Naive thymus-derived CD4-positive, alpha-beta T cell (primary cell): ENCODE measurements at regions of chr16 and their contacts with region 1.

Region 1: DNA sequence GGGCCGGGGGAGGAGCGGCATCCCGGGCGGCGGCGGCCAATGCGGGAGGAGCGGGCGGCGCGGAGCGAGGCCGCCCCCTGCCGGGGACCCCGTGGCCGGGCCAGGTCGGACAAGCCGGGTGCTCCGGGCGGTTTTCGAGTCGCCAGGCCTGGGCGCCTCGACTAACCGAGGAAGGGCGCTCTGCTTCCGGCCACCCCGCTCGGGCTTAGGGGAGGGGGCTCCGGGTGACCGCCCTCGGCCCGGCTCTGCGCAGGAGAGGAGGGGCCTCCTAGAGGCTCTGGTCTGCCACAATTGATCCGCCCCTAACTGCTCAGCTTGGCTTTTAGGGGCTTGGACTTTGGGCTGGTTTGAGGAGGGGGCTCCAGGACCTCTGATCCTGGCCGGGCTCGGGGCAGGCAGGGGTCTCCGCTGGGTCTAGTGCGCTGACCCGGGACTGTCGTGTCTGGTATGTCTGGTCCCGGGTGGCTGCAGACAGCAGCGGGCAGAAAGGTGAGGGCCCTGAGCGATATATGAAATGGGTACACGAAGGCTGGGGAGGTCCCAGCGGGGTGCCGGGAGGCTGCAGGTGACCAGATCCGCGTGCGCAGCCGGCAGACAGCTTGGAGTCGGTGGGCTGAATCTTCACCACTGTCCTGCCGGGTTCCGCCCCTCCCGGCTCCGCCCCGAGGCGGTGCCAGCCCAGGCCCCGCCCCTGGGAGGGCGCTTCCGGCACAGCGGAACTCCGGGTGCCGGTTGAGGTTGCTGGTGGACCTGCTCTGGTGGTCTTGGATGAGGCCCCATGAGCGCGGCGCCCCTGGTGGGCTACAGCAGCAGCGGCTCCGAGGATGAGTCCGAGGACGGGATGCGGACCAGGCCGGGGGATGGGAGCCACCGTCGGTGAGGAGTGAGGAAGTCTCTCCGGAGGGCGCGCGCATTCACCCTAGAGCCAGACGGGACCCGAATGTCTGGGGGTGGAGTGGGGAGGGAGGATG is at the start of gene USB1:
- DNase-seq: peak; percentile 74 to 96 (median 86)
- ATAC-seq: peak; percentile 87
- H3K4me3 ChIP-seq: peak within 1 kb of the TSS; percentile 98
- H3K4me3 Mint-ChIP-seq: peak within 1 kb of the TSS; percentile 85 to 94 (median 92)
- H3K27ac ChIP-seq: peak within 1 kb of the TSS; percentile 85
- H3K27ac Mint-ChIP-seq: peak within 1 kb of the TSS; percentile 76 to 95 (median 90)
- H3K4me1 ChIP-seq: peaks cover 37% of the 10 kb centered on the region in 2 donors
- H3K4me1 Mint-ChIP-seq: peaks cover 31 to 75% (median 58%) of the 10 kb centered on the region in 7 donors
- H3K27me3 ChIP-seq: no peaks in the 10 kb centered on the region
- H3K27me3 Mint-ChIP-seq: no peaks in the 10 kb centered on the region
- total RNA-seq, gene USB1: 28.7 to 50.8 (median 28.9) TPM

Region 2: DNA sequence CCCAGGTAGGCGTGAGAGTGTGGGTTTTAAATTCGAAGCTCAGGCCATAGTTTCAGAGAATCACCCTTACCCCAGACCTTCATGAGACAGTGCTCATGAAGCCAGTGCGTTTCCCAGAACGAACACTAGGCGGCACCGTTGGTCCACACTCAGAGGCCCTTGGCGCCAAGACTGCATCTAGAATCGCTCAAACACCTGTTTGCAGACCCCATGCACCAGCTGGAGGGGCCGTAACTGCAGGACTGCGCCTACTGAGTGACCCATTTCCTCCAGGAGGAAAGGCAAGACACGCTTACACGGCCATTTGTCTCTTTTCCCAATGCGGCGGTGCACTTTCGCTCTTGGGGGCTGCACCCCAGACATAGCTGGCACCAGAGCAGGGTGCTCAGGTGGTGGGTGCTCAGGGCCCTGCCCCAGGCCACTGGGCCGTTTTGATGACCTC is 424.5 kb before region 1 on chr16:
- CTCF ChIA-PET with region 1: no interaction called
- POLR2A ChIA-PET with region 1: interaction called, 3 read pairs
- intact Hi-C with region 1: loop called (anchors 1 to 2 kb)
- DNase-seq: peak; percentile 55 to 83 (median 72)
- ATAC-seq: peak; percentile 87
- H3K4me3 ChIP-seq: no peak overlapping the region
- H3K4me3 Mint-ChIP-seq: no peak overlapping the region
- H3K27ac ChIP-seq: no peak overlapping the region
- H3K27ac Mint-ChIP-seq: peak overlapping the region in 1 of 9 donors; percentile 96
- H3K4me1 ChIP-seq: peaks cover 0 to 44% of the 10 kb centered on the region in 2 donors
- H3K4me1 Mint-ChIP-seq: peaks cover 0 to 45% (median 6%) of the 10 kb centered on the region in 7 donors
- H3K27me3 ChIP-seq: no peaks in the 10 kb centered on the region
- H3K27me3 Mint-ChIP-seq: peaks cover 0 to 6% (median 4%) of the 10 kb centered on the region in 5 donors

Region 3: GRCh38 chr16:57764341-57765159 is 236.4 kb before region 1 on chr16:
- CTCF ChIA-PET with region 1: no interaction called
- POLR2A ChIA-PET with region 1: no interaction called
- intact Hi-C with region 1: loop called in 1 of 2 experiments (anchors 2 kb)
- DNase-seq: peak in 1 of 9 donors; percentile 6
- ATAC-seq: peak; percentile 68
- H3K4me3 ChIP-seq: no peak overlapping the region
- H3K4me3 Mint-ChIP-seq: no peak overlapping the region
- H3K27ac ChIP-seq: no peak overlapping the region
- H3K27ac Mint-ChIP-seq: no peak overlapping the region
- H3K4me1 ChIP-seq: no peaks in the 10 kb centered on the region
- H3K4me1 Mint-ChIP-seq: no peaks in the 10 kb centered on the region
- H3K27me3 ChIP-seq: no peaks in the 10 kb centered on the region
- H3K27me3 Mint-ChIP-seq: no peaks in the 10 kb centered on the region

Region 4: DNA sequence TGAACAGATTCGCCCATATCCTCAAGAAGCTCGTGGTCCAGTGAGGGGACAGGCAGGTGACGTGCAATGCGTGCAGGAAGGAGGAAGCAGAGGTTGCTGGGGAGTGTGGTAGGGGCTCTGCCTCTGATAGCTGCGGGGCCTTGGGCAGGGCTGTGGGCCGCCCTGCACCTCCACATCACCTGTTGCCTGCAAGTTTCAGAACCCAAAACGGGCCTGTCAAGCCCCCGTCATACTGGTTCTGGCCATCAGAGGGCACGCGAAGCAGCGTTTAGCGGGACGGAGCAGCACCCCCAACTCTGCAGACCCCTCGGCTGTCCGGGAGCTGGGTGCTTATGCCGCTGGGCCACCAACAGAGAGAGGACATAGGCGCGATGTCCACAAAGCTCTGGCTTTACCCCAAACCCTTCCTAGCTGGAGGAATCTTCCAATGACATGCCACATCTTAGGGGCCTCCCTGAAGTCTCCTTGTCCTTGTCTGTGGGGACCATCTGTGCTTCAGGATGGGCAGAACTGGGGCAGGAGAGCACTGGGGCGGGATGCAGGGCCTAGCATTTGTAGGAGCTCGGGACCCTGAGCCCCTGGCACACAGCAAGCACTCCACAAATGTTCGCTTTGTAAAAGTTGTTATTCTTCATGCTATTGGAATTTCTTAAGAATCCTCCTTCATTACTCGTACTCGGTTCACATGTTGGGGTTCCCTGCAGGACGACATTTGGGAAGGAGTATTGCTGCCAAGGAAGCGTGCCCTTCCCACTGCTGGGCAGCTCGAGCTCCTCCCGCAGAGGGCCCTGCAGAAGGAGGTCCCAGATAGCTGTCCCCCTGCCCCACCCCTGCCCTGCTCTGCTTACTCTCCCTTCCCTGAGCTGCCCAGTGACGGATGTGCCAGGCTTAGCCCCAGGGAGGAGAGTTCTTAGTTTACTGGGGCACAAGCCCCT is 94.3 kb before region 1 on chr16:
- CTCF ChIA-PET with region 1: interaction called, 43 read pairs
- POLR2A ChIA-PET with region 1: interaction called, 4 read pairs
- intact Hi-C with region 1: no loop called
- DNase-seq: peak in 5 of 9 donors; percentile 6 to 27 (median 16)
- ATAC-seq: peak; percentile 54
- H3K4me3 ChIP-seq: no peak overlapping the region
- H3K4me3 Mint-ChIP-seq: no peak overlapping the region
- H3K27ac ChIP-seq: no peak overlapping the region
- H3K27ac Mint-ChIP-seq: no peak overlapping the region
- H3K4me1 ChIP-seq: no peaks in the 10 kb centered on the region
- H3K4me1 Mint-ChIP-seq: no peaks in the 10 kb centered on the region
- H3K27me3 ChIP-seq: no peaks in the 10 kb centered on the region
- H3K27me3 Mint-ChIP-seq: peaks cover 4 to 10% (median 6%) of the 10 kb centered on the region in 5 donors

Region 5: DNA sequence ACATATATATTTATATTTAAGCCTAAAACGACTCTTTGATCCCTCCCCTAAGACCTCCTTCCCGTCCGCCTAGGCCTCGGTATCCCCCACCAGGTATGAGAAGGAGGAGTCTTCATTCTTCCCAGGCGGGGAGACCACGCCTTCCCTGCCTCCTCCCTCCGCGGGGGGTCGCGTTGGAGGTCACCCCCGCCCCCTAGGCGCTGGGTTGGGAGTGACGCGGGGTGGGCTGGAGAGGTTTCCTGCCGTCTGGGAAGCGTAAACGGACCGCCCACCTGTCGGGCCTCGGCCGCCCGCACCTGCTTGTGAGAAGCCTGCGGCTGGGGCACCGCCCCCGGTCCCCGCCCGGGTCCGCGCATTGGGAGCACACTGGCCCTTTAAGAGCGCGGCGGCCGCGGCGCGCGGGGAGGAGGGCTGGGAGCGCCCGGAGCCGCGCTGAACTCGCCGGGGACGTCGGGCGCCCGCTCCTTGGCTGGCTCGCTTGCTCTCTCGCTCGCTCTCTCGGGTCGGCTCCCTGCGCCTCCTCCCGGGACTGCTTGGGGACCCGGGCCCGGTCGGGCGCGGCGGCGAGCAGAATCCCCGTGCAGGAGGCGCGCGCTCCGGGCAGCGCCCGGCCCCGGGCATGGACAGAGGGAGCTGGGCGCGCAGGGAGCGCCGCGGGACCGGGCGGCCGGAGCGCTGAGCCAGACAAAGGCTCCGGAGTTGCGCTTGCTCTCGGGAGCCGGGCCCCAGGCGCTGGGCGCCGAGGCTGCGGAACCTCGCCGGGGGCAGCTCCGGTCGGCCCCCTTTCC is 24.6 kb after region 1 on chr16 and contains the start of gene MMP15:
- CTCF ChIA-PET with region 1: interaction called, 4 read pairs
- POLR2A ChIA-PET with region 1: interaction called, 3 read pairs
- intact Hi-C with region 1: loop called (anchors 1 kb)
- DNase-seq: peak; percentile 27 to 74 (median 43)
- ATAC-seq: peak; percentile 76
- H3K4me3 ChIP-seq: peak within 1 kb of the TSS; percentile 78
- H3K4me3 Mint-ChIP-seq: peak within 1 kb of the TSS; percentile 90 to 95 (median 93)
- H3K27ac ChIP-seq: no peak within 1 kb of the TSS
- H3K27ac Mint-ChIP-seq: peak within 1 kb of the TSS; percentile 73 to 90 (median 84)
- H3K4me1 ChIP-seq: peaks cover 8 to 9% of the 10 kb centered on the region in 2 donors
- H3K4me1 Mint-ChIP-seq: peaks cover 6 to 18% (median 12%) of the 10 kb centered on the region in 7 donors
- H3K27me3 ChIP-seq: no peaks in the 10 kb centered on the region
- H3K27me3 Mint-ChIP-seq: peaks cover 0 to 39% (median 3%) of the 10 kb centered on the region in 5 donors
- total RNA-seq, gene MMP15: 0.20 to 0.85 (median 0.69) TPM

Region 6: GRCh38 chr16:58212824-58213655 is 212.0 kb after region 1 on chr16:
- CTCF ChIA-PET with region 1: no interaction called
- POLR2A ChIA-PET with region 1: no interaction called
- intact Hi-C with region 1: no loop called
- DNase-seq: no peak
- ATAC-seq: no peak
- H3K4me3 ChIP-seq: no peak overlapping the region
- H3K4me3 Mint-ChIP-seq: no peak overlapping the region
- H3K27ac ChIP-seq: no peak overlapping the region
- H3K27ac Mint-ChIP-seq: no peak overlapping the region
- H3K4me1 ChIP-seq: no peaks in the 10 kb centered on the region
- H3K4me1 Mint-ChIP-seq: peaks cover 0 to 5% (median 0%) of the 10 kb centered on the region in 7 donors
- H3K27me3 ChIP-seq: no peaks in the 10 kb centered on the region
- H3K27me3 Mint-ChIP-seq: peaks cover 26 to 44% (median 40%) of the 10 kb centered on the region in 5 donors

Region 7: DNA sequence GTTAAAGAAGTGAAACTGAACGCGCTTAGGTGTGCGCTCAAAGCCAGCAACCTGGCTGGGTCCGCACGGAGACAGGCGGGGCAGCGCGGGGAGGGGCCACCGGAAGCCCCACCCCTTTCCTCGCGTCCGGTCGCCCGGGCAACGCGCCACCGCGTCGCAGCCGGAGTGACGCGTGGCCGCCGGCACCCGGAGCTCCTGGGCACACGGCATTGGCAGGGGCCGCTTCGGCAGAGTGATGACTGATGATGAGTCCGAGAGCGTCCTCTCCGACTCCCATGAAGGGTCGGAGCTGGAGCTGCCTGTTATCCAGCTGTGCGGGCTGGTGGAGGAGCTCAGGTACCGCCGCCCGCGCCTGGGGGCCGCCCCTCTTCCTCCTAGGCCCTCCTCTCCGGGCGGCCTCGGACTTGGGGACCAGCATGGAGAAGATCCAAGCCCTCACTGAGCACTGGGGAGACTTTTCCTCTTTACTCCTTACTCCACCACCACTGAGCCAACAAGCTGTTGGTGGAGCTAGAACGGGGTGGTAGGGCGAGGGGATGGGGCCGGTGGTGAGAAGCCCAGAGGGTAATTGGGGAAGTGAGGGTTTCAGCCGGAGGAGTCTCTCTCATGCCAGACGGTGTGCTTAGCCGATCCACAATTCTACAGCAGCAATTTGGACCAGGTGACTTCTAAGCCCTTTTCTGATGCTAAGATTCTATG is 248.9 kb after region 1 on chr16:
- CTCF ChIA-PET with region 1: no interaction called
- POLR2A ChIA-PET with region 1: no interaction called
- intact Hi-C with region 1: loop called in 1 of 2 experiments (anchors 1 kb)
- DNase-seq: peak; percentile 74 to 91 (median 86)
- ATAC-seq: peak; percentile 98
- H3K4me3 ChIP-seq: peak overlapping the region; percentile 77
- H3K4me3 Mint-ChIP-seq: peak overlapping the region; percentile 77 to 87 (median 82)
- H3K27ac ChIP-seq: peak overlapping the region; percentile 43
- H3K27ac Mint-ChIP-seq: peak overlapping the region in 8 of 9 donors; percentile 31 to 86 (median 67)
- H3K4me1 ChIP-seq: peaks cover 5 to 7% of the 10 kb centered on the region in 2 donors
- H3K4me1 Mint-ChIP-seq: peaks cover 6 to 13% (median 12%) of the 10 kb centered on the region in 7 donors
- H3K27me3 ChIP-seq: no peaks in the 10 kb centered on the region
- H3K27me3 Mint-ChIP-seq: peaks cover 0 to 17% (median under 1%) of the 10 kb centered on the region in 5 donors